ENCODE measurements at regions of chr5 and their contacts with region 1.

Region 1: GRCh38 chr5:37774912-37775483 is 64.8 kb downstream of the GDNF start:
- DNase-seq: peak in 1 of 9 experiments; percentile 9
- ATAC-seq: no peak
- H3K4me3 ChIP-seq: no peak overlapping the region
- H3K4me3 Mint-ChIP-seq: no peak overlapping the region
- H3K27ac ChIP-seq: no peak overlapping the region
- H3K27ac Mint-ChIP-seq: no peak overlapping the region
- H3K4me1 ChIP-seq: no peaks in the 10 kb centered on the region
- H3K4me1 Mint-ChIP-seq: no peaks in the 10 kb centered on the region
- H3K27me3 ChIP-seq: no peaks in the 10 kb centered on the region
- H3K27me3 Mint-ChIP-seq: peaks cover 6% of the 10 kb centered on the region
- CTCF ChIP-seq: peak; percentile 26

Region 2: DNA sequence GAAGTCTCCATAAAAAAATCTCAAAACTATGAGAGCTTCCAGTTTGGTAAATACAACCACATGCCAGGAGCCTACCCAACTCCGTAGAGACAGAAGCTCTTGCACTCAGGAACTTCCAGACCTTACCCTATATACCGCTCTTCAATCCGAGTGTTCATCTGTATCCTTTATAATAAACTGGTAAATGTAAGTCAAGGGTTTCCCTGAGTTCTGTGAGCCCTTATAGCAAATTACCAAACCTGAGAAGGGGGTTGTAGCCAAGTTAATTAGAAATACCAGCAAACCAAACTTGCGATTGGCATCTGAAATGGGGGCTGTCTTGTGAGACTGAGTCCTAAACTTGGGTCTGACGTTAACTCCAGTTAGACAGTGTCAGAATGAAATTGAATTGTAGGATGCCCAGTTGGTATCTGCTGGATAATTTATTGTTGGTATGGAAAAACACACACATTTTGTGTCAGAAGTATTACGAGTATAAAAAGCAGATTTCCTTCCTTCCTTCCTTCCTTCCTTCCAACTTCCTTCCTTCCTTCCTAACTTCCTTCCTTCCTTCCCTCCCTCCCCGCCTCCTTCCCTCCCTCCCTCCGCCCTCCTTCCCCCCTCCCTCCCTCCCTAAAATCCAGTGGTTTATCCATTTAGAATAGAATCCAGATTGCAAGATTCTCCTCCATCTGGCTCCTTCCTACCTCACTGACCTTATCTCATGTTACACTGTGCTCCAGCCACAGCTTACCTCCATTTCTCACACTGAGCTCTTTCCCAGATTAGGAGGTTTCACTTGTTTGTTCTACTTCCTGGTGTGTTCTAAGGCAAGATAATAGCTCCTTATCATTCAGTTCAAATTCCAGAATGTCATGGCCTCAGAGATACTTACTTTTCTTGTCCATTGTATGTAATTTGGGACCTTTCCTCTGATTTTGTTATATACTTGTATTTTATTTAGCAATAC is 199.2 kb before region 1 on chr5:
- CTCF ChIA-PET with region 1: no interaction called
- POLR2A ChIA-PET with region 1: no interaction called
- intact Hi-C with region 1: no loop called
- DNase-seq: no peak
- ATAC-seq: no peak
- H3K4me3 ChIP-seq: no peak overlapping the region
- H3K4me3 Mint-ChIP-seq: no peak overlapping the region
- H3K27ac ChIP-seq: no peak overlapping the region
- H3K27ac Mint-ChIP-seq: no peak overlapping the region
- H3K4me1 ChIP-seq: peaks cover 5% of the 10 kb centered on the region
- H3K4me1 Mint-ChIP-seq: peaks cover 20% of the 10 kb centered on the region
- H3K27me3 ChIP-seq: no peaks in the 10 kb centered on the region
- H3K27me3 Mint-ChIP-seq: no peaks in the 10 kb centered on the region
- CTCF ChIP-seq: no peak

Region 3: DNA sequence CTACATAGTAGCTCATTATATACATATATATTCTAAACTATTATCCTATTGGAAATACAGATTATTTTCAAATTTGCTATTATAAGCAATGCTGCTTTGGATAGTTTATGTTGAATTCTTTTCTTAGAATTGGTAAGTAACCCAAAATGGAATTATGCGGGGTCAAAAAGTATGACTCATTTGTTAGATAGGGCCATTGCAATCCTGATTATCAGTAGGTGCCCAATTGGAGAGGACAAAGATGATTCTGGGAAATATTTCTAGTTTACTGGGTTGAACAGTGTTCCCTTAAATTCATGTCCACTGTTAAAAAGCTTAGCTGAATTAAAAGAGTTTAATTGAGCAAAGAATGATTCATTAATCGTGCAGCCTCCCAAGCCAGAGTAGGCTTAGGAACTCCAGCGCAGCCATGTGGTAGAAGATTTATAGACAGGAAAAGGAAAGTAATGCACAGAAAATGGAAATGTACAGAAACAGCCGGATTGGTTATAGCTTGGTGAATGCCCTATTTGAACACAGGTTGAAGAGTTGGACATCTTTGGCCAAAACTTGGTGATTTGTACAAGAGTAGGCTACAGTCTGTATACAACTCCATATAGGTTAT is 16.9 kb before region 1 on chr5:
- CTCF ChIA-PET with region 1: interaction called, 3 read pairs
- POLR2A ChIA-PET with region 1: no interaction called
- intact Hi-C with region 1: loop called in 1 of 2 experiments (anchors 1 kb)
- DNase-seq: no peak
- ATAC-seq: no peak
- H3K4me3 ChIP-seq: no peak overlapping the region
- H3K4me3 Mint-ChIP-seq: no peak overlapping the region
- H3K27ac ChIP-seq: no peak overlapping the region
- H3K27ac Mint-ChIP-seq: no peak overlapping the region
- H3K4me1 ChIP-seq: no peaks in the 10 kb centered on the region
- H3K4me1 Mint-ChIP-seq: no peaks in the 10 kb centered on the region
- H3K27me3 ChIP-seq: no peaks in the 10 kb centered on the region
- H3K27me3 Mint-ChIP-seq: no peaks in the 10 kb centered on the region
- CTCF ChIP-seq: no peak